HepG2 (cell line): ENCODE measurements at regions of chr11 and their contacts with region 1.

Region 1: GRCh38 chr11:47060807-47061206 is 115.9 kb downstream of the ARFGAP2 start:
- DNase-seq: no peak
- ATAC-seq: no peak
- H3K4me3 ChIP-seq: no peak overlapping the region
- H3K27ac ChIP-seq: no peak overlapping the region
- H3K4me1 ChIP-seq: peaks cover 11% of the 10 kb centered on the region
- H3K27me3 ChIP-seq: no peaks in the 10 kb centered on the region
- CTCF ChIP-seq: no peak
- EP300 ChIP-seq: no peak
- POLR2A ChIP-seq: no peak
- RAD21 ChIP-seq: no peak

Region 2: DNA sequence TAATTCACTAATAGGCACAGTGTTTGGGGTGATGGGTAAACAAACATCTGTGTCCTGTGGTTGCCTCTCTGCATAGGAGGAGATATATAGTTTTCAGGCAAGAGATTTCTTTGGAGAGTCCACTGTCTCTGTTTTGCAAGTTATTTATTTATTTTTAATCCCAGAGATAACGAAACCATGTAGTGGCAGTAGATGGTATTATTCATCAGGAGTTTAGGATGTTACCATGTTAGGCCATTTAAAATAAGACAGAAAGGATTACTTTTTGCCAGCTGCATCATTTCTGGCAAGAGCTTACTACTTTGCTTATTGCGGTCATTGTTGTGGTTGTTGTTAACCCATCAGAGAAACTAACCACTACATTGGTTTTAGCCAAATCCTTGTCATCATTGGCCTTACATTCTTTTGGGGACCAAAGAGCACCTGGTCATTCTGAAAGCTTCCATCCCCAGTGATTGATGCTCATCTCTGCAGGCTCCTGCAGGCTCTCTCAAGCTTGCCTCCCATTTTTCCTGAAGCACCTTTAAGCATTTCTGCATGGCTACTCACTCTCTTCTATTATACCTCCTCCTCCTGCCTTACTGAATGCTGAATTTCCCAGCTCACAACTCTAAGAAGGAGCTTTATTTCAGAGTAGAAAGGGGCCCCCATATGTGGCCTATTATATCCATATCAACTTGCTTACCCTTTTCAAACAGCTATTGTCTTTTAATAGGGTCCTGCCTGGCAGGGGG is 39.8 kb before region 1 on chr11:
- CTCF ChIA-PET with region 1: no interaction called
- POLR2A ChIA-PET with region 1: no interaction called
- in situ Hi-C with region 1: no loop called
- intact Hi-C with region 1: no loop called
- DNase-seq: no peak
- ATAC-seq: no peak
- H3K4me3 ChIP-seq: no peak overlapping the region
- H3K27ac ChIP-seq: no peak overlapping the region
- H3K4me1 ChIP-seq: no peaks in the 10 kb centered on the region
- H3K27me3 ChIP-seq: no peaks in the 10 kb centered on the region
- CTCF ChIP-seq: no peak
- EP300 ChIP-seq: no peak
- POLR2A ChIP-seq: no peak
- RAD21 ChIP-seq: no peak

Region 3: GRCh38 chr11:47111318-47111804 is 50.6 kb after region 1 on chr11:
- CTCF ChIA-PET with region 1: no interaction called
- POLR2A ChIA-PET with region 1: no interaction called
- in situ Hi-C with region 1: no loop called
- intact Hi-C with region 1: loop called (anchors 10 kb)
- DNase-seq: no peak
- ATAC-seq: no peak
- H3K4me3 ChIP-seq: no peak overlapping the region
- H3K27ac ChIP-seq: no peak overlapping the region
- H3K4me1 ChIP-seq: no peaks in the 10 kb centered on the region
- H3K27me3 ChIP-seq: no peaks in the 10 kb centered on the region
- CTCF ChIP-seq: no peak
- EP300 ChIP-seq: no peak
- POLR2A ChIP-seq: no peak
- RAD21 ChIP-seq: no peak

Region 4: GRCh38 chr11:47125083-47125482 is 64.3 kb after region 1 on chr11:
- CTCF ChIA-PET with region 1: no interaction called
- POLR2A ChIA-PET with region 1: no interaction called
- in situ Hi-C with region 1: no loop called
- intact Hi-C with region 1: no loop called
- DNase-seq: no peak
- ATAC-seq: no peak
- H3K4me3 ChIP-seq: no peak overlapping the region
- H3K27ac ChIP-seq: no peak overlapping the region
- H3K4me1 ChIP-seq: peaks cover 2% of the 10 kb centered on the region
- H3K27me3 ChIP-seq: no peaks in the 10 kb centered on the region
- CTCF ChIP-seq: no peak
- EP300 ChIP-seq: no peak
- POLR2A ChIP-seq: no peak
- RAD21 ChIP-seq: no peak

Region 5: GRCh38 chr11:47302853-47303252 is 242.0 kb after region 1 on chr11:
- CTCF ChIA-PET with region 1: no interaction called
- POLR2A ChIA-PET with region 1: no interaction called
- in situ Hi-C with region 1: no loop called
- intact Hi-C with region 1: loop called (anchors 5 kb)
- DNase-seq: no peak
- ATAC-seq: no peak
- H3K4me3 ChIP-seq: no peak overlapping the region
- H3K27ac ChIP-seq: no peak overlapping the region
- H3K4me1 ChIP-seq: no peaks in the 10 kb centered on the region
- H3K27me3 ChIP-seq: no peaks in the 10 kb centered on the region
- CTCF ChIP-seq: no peak
- EP300 ChIP-seq: no peak
- POLR2A ChIP-seq: no peak
- RAD21 ChIP-seq: no peak